Natural killer cell (primary cell): ENCODE measurements at regions of chr12 and their contacts with region 1.

Region 1: GRCh38 chr12:21677622-21678277 is 20.1 kb upstream of the LDHB start:
- DNase-seq: peak in 1 of 2 donors; percentile 56
- ATAC-seq: no peak
- H3K4me3 ChIP-seq: no peak overlapping the region
- H3K4me3 Mint-ChIP-seq: no peak overlapping the region
- H3K27ac ChIP-seq: no peak overlapping the region
- H3K27ac Mint-ChIP-seq: no peak overlapping the region
- H3K4me1 ChIP-seq: no peaks in the 10 kb centered on the region
- H3K4me1 Mint-ChIP-seq: no peaks in the 10 kb centered on the region
- H3K27me3 ChIP-seq: no peaks in the 10 kb centered on the region
- H3K27me3 Mint-ChIP-seq: peaks cover 3 to 9% of the 10 kb centered on the region in 2 donors
- CTCF ChIP-seq: no peak

Region 2: GRCh38 chr12:21296751-21297406 is 380.9 kb before region 1 on chr12:
- intact Hi-C with region 1: loop called (anchors 1 kb)
- DNase-seq: peak in 1 of 2 donors; percentile 38
- ATAC-seq: no peak
- H3K4me3 ChIP-seq: no peak overlapping the region
- H3K4me3 Mint-ChIP-seq: no peak overlapping the region
- H3K27ac ChIP-seq: no peak overlapping the region
- H3K27ac Mint-ChIP-seq: no peak overlapping the region
- H3K4me1 ChIP-seq: no peaks in the 10 kb centered on the region
- H3K4me1 Mint-ChIP-seq: no peaks in the 10 kb centered on the region
- H3K27me3 ChIP-seq: no peaks in the 10 kb centered on the region
- H3K27me3 Mint-ChIP-seq: peaks cover 0 to 3% of the 10 kb centered on the region in 2 donors
- CTCF ChIP-seq: peak; percentile 70

Region 3: DNA sequence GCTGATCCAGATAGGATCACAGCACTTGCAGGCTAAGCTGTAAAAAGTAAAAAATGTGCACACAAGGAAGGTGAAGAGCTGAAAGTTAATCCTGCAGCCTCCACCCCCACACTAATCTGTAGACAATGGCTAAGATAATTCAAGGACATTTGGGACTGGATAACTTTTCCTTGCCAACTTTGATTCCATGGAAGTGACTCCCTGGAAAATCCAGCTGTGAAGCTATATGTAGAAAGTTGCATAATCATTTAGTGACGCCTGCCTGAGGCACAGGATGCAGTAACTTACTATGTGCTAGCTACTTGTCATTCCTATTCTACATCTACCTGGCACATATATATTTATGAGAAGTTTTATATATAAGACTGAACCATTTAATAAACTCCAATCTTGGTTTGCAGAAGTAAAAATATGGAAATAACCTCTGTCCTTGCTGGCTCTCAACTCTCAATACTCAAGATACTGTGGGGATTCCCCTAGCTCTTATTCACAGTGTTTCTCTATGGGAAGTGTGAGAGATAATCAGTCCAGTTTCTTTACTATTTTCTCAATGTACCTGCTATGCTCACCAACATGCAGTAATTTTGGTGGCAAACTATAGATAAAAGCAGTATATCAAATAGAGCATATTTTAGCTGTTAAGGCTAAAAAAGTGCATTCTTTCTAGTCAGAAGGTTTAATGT is 34.9 kb before region 1 on chr12:
- intact Hi-C with region 1: no loop called
- DNase-seq: peak in 1 of 2 donors; percentile 22
- ATAC-seq: no peak
- H3K4me3 ChIP-seq: no peak overlapping the region
- H3K4me3 Mint-ChIP-seq: no peak overlapping the region
- H3K27ac ChIP-seq: no peak overlapping the region
- H3K27ac Mint-ChIP-seq: no peak overlapping the region
- H3K4me1 ChIP-seq: no peaks in the 10 kb centered on the region
- H3K4me1 Mint-ChIP-seq: peaks cover 0 to 5% of the 10 kb centered on the region in 2 donors
- H3K27me3 ChIP-seq: no peaks in the 10 kb centered on the region
- H3K27me3 Mint-ChIP-seq: no peaks in the 10 kb centered on the region
- CTCF ChIP-seq: no peak